Prostate gland (tissue), 2 donors: ENCODE measurements at regions of chr18 and their contacts with region 1.

Region 1: GRCh38 chr18:48022531-48023329 is 92.3 kb upstream of the SMAD2 start:
- DNase-seq: no peak
- H3K4me3 ChIP-seq: no peak overlapping the region
- H3K27ac ChIP-seq: no peak overlapping the region
- H3K4me1 ChIP-seq: no peaks in the 10 kb centered on the region
- H3K27me3 ChIP-seq: peaks cover 6% of the 10 kb centered on the region
- CTCF ChIP-seq: peak in 3 of 4 experiments; percentile 40 to 62 (median 53)
- POLR2A ChIP-seq: no peak

Region 2: DNA sequence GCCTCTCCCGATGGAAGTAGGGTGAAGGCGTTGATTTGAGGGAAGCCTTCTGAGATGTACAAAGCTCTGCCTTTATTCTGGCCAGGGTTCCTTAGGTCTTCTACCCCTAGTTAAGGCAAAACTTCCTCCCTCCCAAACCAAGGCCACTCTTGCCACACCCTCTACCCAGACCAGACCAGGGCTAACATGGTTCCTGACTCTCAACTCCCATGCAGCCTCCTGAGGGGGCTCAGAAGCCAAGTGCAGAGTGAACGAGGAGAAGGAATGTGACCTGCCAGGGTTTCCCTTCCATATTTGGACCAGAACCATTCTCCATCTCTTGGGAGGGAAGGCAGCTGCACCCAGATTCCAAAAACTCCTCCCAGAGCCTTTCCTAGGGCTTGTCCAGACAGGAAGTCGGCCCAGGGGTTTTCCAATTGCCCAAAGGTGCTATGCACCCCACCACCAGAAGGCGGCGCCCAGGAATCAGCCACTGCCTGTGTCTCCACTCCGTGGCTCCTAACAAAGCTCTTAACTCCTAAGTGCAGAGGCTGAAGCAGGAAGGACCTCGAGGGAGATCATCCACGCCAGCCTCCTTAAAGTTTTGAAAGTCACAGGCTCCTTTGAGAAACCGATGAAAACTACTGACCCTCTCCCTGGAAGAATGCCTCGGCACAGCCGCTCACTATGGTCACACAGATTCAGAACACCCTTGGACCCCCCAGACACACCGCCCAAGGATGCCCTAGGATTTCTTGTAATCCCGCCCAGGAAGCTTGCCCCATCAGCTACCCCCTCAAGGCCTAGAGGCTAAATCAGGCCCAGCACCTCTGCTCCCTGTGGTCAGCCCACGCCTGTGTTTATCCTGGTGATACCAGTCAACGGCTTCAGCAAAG is 250.1 kb before region 1 on chr18:
- intact Hi-C with region 1: loop called (anchors 5 kb)
- DNase-seq: no peak
- H3K4me3 ChIP-seq: no peak overlapping the region
- H3K27ac ChIP-seq: no peak overlapping the region
- H3K4me1 ChIP-seq: no peaks in the 10 kb centered on the region
- H3K27me3 ChIP-seq: no peaks in the 10 kb centered on the region
- CTCF ChIP-seq: peak in 3 of 4 experiments; percentile 53 to 77 (median 73)
- POLR2A ChIP-seq: no peak